A549 (cell line): ENCODE measurements at regions of chr6 and their contacts with region 1.

Region 1: DNA sequence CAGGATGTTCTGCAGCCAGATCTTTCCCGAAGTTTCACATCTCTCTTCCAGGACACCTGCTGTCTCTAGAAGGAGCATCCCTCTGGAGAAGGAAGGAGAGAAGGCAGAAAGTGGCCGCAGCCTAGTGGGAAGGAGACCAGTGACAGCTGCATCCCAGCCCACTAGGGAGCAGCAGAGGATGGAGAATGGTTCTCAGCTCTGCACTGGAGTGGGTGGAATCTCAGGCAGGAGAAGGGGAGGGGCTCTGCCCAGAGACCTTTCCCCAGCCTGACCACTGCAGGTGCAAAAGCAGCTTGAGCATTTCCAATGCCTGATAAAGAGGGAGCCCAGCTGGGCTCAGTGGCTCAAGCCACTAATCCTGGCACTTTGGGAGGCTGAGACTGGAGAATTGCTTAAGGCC is 32.3 kb downstream of the NCR2 start:
- DNase-seq: peak; percentile 56 to 59
- ATAC-seq: peak; percentile 93 to 96
- H3K4me3 ChIP-seq: no peak overlapping the region
- H3K27ac ChIP-seq: no peak overlapping the region
- H3K4me1 ChIP-seq: peaks cover 5% of the 10 kb centered on the region; the same call in 1 of the 3 replicates
- CTCF ChIP-seq: peak; percentile 68
- EP300 ChIP-seq: no peak
- POLR2A ChIP-seq: no peak
- RAD21 ChIP-seq: peak; percentile 85

Region 2: GRCh38 chr6:41122373-41122772 is 245.3 kb before region 1 on chr6:
- CTCF ChIA-PET with region 1: no interaction called
- POLR2A ChIA-PET with region 1: no interaction called
- DNase-seq: no peak
- ATAC-seq: no peak
- H3K4me3 ChIP-seq: no peak overlapping the region
- H3K27ac ChIP-seq: no peak overlapping the region
- H3K4me1 ChIP-seq: no peaks in the 10 kb centered on the region
- CTCF ChIP-seq: no peak
- EP300 ChIP-seq: no peak
- POLR2A ChIP-seq: no peak
- RAD21 ChIP-seq: no peak

Region 3: DNA sequence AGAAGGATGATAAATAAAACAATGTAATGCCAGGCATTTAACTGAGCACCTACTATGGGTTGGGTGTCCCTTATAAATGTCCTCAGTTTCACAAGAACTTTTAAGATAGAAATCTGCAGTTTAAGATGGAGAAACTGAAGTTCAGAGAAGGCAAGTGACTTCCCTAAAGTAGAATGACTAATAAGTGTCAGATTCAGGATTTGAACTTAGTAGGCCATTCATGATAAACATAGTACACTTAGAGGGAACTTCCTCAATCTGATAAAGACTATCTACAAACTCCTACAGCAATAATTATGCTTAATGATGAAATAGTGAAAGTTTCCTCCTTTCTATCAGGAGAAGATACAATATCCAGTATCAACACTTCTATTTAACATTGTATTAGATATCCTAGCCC is 11.6 kb after region 1 on chr6:
- CTCF ChIA-PET with region 1: interaction called, 14 read pairs
- POLR2A ChIA-PET with region 1: no interaction called
- DNase-seq: no peak
- ATAC-seq: no peak
- H3K4me3 ChIP-seq: no peak overlapping the region
- H3K27ac ChIP-seq: no peak overlapping the region
- H3K4me1 ChIP-seq: no peaks in the 10 kb centered on the region
- CTCF ChIP-seq: no peak
- EP300 ChIP-seq: no peak
- POLR2A ChIP-seq: no peak
- RAD21 ChIP-seq: no peak

Region 4: DNA sequence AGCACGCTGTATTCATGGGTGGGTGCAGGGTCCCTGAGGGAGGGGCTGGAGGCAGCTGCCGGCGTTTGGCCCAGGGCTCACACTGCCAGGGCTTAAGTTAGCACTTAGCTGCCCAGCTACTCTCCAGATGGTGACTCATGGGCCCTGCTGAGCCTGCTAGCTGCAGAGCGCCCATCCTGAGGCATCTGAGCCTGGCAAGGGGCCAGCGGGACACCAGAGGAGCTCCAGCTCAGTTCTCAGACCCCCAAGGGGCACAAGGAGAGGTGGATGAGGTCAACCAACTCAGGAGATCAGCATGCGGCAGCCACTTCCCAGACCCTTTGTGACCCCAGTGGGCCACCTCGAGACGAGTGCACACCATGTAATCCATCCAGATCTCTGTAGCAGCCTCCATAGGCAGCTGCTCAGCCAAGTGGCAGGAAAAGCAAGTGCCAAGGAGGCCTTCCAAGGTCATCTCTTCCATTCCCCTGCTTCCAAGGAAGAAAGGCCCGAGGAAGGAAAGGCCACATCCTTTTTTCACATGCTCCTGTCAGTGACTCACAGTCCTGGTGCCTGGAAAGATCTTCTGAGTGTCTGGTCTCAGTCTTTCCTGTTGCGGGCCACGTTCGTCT is 213.8 kb after region 1 on chr6:
- CTCF ChIA-PET with region 1: interaction called, 10 read pairs
- POLR2A ChIA-PET with region 1: no interaction called
- DNase-seq: peak; percentile 81 to 82
- ATAC-seq: peak; percentile 69 to 83
- H3K4me3 ChIP-seq: no peak overlapping the region
- H3K27ac ChIP-seq: peak overlapping the region; percentile 89 to 92
- H3K4me1 ChIP-seq: peaks cover 84% of the 10 kb centered on the region
- CTCF ChIP-seq: no peak
- EP300 ChIP-seq: peak in 1 of 2 experiments; percentile 49; a peak in 1 of 5 replicates
- POLR2A ChIP-seq: no peak
- RAD21 ChIP-seq: no peak; a peak in 1 of 5 replicates

Region 5: DNA sequence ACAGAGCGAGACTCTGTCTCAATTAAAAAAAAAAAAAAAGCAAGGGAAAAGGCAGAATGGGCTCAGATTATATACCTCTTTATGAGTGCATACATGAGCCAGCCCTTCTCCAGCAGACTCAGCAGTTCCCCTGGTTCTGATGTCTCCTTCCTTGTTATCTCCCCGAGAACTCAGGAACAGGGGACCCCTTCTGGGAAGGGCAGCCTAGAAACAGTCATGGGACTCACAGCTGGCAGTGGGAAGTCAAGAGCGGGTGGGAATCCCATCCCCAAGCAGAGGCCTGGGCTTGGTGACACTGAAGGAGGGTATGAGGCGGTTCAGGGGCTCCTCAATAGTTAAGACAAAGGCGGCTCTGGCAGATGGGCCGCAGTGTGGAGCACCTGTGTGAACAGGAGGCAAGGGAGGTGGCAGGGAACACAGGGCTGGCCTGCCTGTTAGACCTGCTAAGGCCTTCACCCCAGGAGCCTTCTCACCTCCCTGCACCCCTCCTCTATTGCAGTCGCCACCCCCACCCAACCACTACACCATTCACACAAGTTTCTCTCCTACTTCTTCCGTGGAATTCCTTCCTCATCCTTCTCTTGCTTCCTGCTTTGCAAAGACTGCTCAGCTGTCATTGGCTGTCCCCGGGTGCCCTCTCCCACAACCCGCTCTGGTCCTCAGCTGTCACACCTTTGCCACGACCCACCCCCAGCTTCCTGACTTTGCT is 240.9 kb after region 1 on chr6:
- CTCF ChIA-PET with region 1: interaction called, 73 read pairs
- POLR2A ChIA-PET with region 1: no interaction called
- DNase-seq: no peak
- ATAC-seq: no peak
- H3K4me3 ChIP-seq: no peak overlapping the region
- H3K27ac ChIP-seq: no peak overlapping the region
- H3K4me1 ChIP-seq: no peaks in the 10 kb centered on the region
- CTCF ChIP-seq: no peak
- EP300 ChIP-seq: no peak
- POLR2A ChIP-seq: no peak
- RAD21 ChIP-seq: no peak

Region 6: DNA sequence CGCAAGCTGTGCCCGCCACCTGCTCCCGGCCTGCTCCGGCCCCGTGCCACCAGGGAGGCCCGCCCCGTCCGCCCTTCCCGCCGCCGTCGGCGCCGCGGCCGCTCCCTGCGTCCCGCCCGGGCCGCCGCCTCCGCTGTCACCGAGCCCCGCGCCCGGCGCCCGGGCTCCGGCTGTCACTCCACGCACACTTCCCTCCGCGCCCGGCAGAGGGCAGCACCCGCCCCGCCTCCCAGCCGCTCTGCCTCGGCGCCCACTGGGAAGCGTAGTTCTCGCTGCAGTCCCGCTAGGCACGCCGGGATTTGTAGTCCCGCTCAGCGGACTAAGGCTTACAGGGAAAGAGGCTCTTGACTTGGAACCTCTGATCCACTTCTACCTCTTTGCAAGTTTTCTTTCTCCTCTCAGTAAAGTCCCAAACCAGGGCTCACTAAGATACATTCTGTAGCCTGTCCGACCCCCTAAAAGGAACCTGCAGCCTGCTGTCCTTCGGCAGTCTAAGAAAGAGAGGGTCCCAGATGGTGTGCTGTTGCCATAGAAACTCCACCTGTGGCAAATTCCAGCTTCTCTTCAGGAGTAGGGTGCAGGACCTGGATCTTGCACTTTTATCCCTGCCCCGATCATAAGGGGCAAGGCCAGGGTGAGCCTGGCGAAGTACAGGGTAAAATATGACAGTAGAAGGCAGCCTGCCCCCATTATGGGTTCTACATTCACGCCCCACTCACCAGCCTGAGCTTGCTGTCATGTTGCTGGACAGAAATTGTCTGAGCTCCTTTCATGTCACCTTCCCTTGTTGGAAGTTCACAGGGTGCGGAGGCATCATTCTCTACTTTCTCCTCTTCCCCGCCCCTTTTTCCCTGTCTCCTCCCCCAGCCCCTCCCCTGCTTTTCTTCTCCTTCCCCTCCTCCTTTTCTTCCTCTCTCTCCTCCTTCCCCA is 368.0 kb after region 1 on chr6 and contains the start of gene TFEB:
- CTCF ChIA-PET with region 1: interaction called, 11 read pairs
- POLR2A ChIA-PET with region 1: no interaction called
- DNase-seq: peak; percentile 77 to 86
- ATAC-seq: peak; percentile 63 to 72
- H3K4me3 ChIP-seq: peak within 1 kb of the TSS; percentile 90
- H3K27ac ChIP-seq: peak within 1 kb of the TSS; percentile 95 to 99
- H3K4me1 ChIP-seq: peaks cover 32% of the 10 kb centered on the region
- CTCF ChIP-seq: peak; percentile 81
- EP300 ChIP-seq: no peak
- POLR2A ChIP-seq: no peak
- RAD21 ChIP-seq: peak; percentile 37 to 59
- polyA plus RNA-seq, gene TFEB: 2.9 and 3.1 TPM in 2 replicates